H1 (cell line): ENCODE measurements at regions of chr7 and their contacts with region 1.

Region 1: GRCh38 chr7:129825496-129826267 is 127.1 kb downstream of the UBE2H start:
- DNase-seq: peak in 1 of 2 experiments; percentile 99
- H3K4me3 ChIP-seq: peak overlapping the region; percentile 57 to 91 (median 87)
- H3K27ac ChIP-seq: no peak overlapping the region
- H3K4me1 ChIP-seq: peaks cover 0 to 22% (median 8%) of the 10 kb centered on the region in 4 experiments; a peak in 6 of 7 replicates
- H3K27me3 ChIP-seq: no peaks in the 10 kb centered on the region
- CTCF ChIP-seq: peak; percentile 48 to 82 (median 63)
- EP300 ChIP-seq: no peak
- POLR2A ChIP-seq: no peak
- RAD21 ChIP-seq: peak; percentile 70 to 75

Region 2: DNA sequence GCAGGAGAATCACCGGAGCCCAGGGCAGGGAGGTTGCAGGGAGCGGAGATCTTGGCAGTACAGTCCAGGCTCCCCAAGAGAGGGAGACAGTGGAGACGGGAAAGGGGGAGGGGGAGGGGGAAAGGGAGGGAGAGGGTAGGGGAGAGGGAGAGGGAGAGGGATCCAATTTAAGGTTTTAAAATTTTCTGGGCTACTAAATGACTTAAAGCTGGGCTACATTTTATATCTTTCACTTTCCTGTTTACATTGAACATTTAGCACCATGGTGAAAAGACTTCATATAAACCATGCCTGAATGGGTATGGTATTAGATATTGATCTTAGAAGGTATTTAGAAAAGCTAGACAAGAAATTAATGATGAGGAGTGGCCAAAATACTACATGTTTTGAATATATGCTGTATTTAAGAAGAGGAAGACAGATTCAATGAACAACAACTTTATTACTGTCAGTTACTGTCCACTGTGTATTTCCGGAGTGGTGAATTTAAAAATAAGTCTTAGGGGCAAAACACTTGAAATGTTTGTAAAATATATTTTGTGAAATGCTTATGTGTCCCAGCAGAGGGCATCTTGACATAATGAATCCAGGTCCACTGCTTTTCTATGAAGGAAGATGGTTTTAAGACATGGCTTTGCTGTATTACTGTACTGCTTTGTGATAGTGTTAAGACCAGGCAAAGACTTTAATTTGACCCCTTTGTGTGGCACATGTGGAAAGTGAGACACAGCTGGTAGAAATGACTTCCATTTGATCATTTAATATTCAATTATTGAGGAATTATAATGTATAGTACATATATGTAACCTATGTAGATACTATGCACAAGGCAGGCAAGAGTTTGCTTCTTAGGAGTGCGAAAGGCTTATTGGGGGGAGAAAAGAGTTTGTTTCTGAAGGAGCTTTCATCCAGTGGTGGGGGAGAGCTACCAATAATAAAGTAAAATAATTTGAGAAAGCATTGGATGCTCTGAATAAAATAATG is 161.4 kb before region 1 on chr7:
- CTCF ChIA-PET with region 1: interaction called, 21 read pairs
- POLR2A ChIA-PET with region 1: interaction called, 3 read pairs
- DNase-seq: no peak
- H3K4me3 ChIP-seq: no peak overlapping the region
- H3K27ac ChIP-seq: no peak overlapping the region
- H3K4me1 ChIP-seq: peaks cover 0 to 12% (median 3%) of the 10 kb centered on the region in 4 experiments; a peak in 4 of 7 replicates
- H3K27me3 ChIP-seq: no peaks in the 10 kb centered on the region
- CTCF ChIP-seq: peak in 2 of 3 experiments; percentile 49 to 54; a peak in 2 of 4 replicates
- EP300 ChIP-seq: no peak
- POLR2A ChIP-seq: no peak
- RAD21 ChIP-seq: peak; percentile 74

Region 3: DNA sequence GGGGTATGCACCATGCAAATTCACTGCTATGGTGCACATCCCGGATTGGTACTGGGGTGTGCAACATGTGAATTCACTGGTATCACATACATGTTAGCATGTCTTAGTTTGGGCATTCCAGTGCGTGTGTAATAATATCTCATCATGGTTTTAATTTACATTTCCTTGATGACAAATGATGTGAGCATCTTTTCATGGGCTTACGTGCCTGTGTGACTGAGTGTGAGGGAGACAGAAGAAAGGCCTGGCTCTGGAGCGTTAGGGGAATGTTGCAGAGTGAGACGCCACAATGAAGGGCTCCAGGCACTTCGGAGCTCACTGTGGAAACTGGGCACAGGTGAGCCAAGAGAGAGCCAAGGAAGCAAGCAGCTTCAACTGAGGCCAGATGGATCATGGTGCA is 35.5 kb before region 1 on chr7:
- CTCF ChIA-PET with region 1: interaction called, 59 read pairs
- POLR2A ChIA-PET with region 1: interaction called, 4 read pairs
- DNase-seq: no peak
- H3K4me3 ChIP-seq: no peak overlapping the region
- H3K27ac ChIP-seq: no peak overlapping the region
- H3K4me1 ChIP-seq: peaks cover 6 to 18% (median 12%) of the 10 kb centered on the region in 4 experiments
- H3K27me3 ChIP-seq: peaks cover 22 to 60% (median 53%) of the 10 kb centered on the region in 4 experiments
- CTCF ChIP-seq: no peak
- EP300 ChIP-seq: no peak
- POLR2A ChIP-seq: no peak
- RAD21 ChIP-seq: no peak

Region 4: GRCh38 chr7:129845178-129845971 is 19.7 kb after region 1 on chr7:
- CTCF ChIA-PET with region 1: interaction called, 40 read pairs
- POLR2A ChIA-PET with region 1: interaction called, 8 read pairs
- DNase-seq: no peak
- H3K4me3 ChIP-seq: no peak overlapping the region
- H3K27ac ChIP-seq: no peak overlapping the region
- H3K4me1 ChIP-seq: peaks cover 2 to 16% (median 12%) of the 10 kb centered on the region in 4 experiments
- H3K27me3 ChIP-seq: no peaks in the 10 kb centered on the region
- CTCF ChIP-seq: no peak
- EP300 ChIP-seq: no peak
- POLR2A ChIP-seq: no peak
- RAD21 ChIP-seq: no peak

Region 5: DNA sequence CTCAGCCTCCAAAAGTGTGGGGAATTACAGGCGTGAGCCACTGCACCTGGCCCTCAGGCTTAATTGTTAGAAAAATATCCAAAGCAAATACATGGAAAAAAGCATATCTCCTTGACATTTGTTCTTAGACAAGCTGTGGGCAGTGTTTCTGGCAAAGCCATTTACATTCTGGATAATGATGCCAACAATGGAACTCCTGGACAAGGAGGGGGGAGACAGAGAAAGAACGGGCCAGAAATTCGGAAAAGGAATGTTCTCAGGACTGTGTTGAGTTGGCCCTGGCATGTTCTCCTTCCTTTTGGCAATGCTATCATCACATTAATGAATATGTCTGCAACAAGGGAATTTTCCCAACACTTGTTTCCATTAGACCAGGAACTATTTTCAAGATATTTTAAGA is 38.4 kb after region 1 on chr7:
- CTCF ChIA-PET with region 1: no interaction called
- POLR2A ChIA-PET with region 1: no interaction called
- DNase-seq: no peak
- H3K4me3 ChIP-seq: no peak overlapping the region
- H3K27ac ChIP-seq: no peak overlapping the region
- H3K4me1 ChIP-seq: peaks cover 2 to 15% (median 8%) of the 10 kb centered on the region in 4 experiments
- H3K27me3 ChIP-seq: no peaks in the 10 kb centered on the region
- CTCF ChIP-seq: no peak
- EP300 ChIP-seq: no peak
- POLR2A ChIP-seq: no peak
- RAD21 ChIP-seq: no peak

Region 6: DNA sequence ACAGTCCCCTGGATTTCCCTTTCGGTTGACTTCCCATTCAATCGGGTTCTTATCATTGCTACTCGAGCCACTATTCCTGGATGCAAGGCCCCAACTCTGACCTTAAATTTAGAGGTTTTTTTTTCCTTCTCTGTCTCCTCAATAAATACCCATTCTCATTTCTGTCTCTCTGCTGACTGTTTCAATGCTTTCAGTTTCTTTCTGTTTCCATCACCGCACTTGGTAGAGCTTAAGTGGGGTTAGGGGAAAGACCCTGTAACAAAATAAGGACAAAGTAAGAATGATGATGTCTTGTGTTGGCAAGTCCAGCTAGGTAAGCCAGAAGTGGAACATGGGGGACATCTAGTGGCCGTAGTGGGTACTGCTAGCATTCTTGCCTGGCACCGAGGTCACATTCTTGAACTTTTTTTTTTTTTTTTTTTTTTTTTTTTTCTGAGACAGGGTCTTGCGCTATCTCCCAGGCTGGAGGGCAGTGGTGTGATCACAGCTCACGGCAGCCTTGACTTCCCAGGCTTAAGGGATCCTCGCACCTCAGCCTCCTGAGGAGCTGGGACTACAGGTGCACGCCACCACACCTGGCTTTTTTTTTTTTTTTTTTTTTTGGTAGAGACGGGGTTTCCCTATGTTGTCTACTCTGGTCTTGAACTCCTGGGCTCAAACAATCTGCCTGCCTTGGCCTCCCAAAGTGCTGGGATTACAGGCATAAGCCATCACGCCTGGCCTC is 185.2 kb after region 1 on chr7:
- CTCF ChIA-PET with region 1: interaction called, 141 read pairs
- POLR2A ChIA-PET with region 1: interaction called, 3 read pairs
- DNase-seq: peak; percentile 90 to 98
- H3K4me3 ChIP-seq: no peak overlapping the region
- H3K27ac ChIP-seq: no peak overlapping the region
- H3K4me1 ChIP-seq: no peaks in the 10 kb centered on the region
- H3K27me3 ChIP-seq: no peaks in the 10 kb centered on the region
- CTCF ChIP-seq: peak; percentile 77 to 89 (median 88)
- EP300 ChIP-seq: no peak
- POLR2A ChIP-seq: no peak
- RAD21 ChIP-seq: peak; percentile 97 to 98